ENCODE measurements at regions of chr5 and their contacts with region 1.

Region 1: GRCh38 chr5:157431544-157432200 is 28.3 kb upstream of the NIPAL4 start:
- DNase-seq: peak in 1 of 2 experiments; percentile 63
- H3K4me3 ChIP-seq: no peak overlapping the region
- H3K4me3 Mint-ChIP-seq: no peak overlapping the region
- H3K27ac Mint-ChIP-seq: no peak overlapping the region
- H3K4me1 ChIP-seq: no peaks in the 10 kb centered on the region
- H3K4me1 Mint-ChIP-seq: no peaks in the 10 kb centered on the region
- H3K27me3 ChIP-seq: no peaks in the 10 kb centered on the region
- H3K27me3 Mint-ChIP-seq: no peaks in the 10 kb centered on the region
- CTCF ChIP-seq: peak; percentile 56 to 60

Region 2: DNA sequence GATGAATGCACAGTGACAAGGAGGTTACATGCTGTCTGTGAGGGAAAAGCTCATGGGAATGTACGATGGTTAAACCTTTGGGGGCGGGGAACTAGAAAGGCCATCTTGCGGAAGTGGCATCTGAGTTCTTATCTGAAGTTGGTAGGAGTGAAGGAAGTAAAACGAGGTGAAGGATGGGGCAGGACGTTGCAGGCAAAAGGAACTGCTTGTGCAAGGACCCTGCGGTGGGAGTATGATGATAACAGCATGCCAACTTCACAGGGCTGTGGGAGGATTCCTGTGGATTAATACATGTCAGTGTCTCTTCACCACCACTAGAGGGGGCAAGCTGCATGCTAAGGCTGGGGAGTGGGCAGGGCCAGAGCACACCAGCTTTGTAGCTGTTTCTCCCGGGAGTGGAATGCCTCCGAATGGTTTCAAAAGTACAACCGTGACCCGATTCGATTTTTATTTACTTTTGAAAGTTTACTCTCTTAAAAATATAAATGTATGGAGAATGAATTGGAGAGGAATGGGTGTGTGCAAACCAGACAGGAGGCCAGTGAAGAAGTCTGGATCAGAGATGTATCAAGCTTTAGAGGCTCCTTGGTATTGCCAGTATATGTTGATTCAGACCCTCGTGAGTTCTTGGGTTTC is 103.3 kb before region 1 on chr5:
- CTCF ChIA-PET with region 1: interaction called, 5 read pairs
- POLR2A ChIA-PET with region 1: no interaction called
- intact Hi-C with region 1: loop called (anchors 2 kb)
- DNase-seq: peak; percentile 68 to 78
- H3K4me3 ChIP-seq: 0 out of 2 replicates have a peak overlapping the region, but pooled peaks have one; percentile 10
- H3K4me3 Mint-ChIP-seq: peak overlapping the region; percentile 39
- H3K27ac Mint-ChIP-seq: no peak overlapping the region
- H3K4me1 ChIP-seq: peaks cover 30% of the 10 kb centered on the region
- H3K4me1 Mint-ChIP-seq: peaks cover 21% of the 10 kb centered on the region
- H3K27me3 ChIP-seq: no peaks in the 10 kb centered on the region
- H3K27me3 Mint-ChIP-seq: no peaks in the 10 kb centered on the region
- CTCF ChIP-seq: peak; percentile 86 to 94

Region 3: DNA sequence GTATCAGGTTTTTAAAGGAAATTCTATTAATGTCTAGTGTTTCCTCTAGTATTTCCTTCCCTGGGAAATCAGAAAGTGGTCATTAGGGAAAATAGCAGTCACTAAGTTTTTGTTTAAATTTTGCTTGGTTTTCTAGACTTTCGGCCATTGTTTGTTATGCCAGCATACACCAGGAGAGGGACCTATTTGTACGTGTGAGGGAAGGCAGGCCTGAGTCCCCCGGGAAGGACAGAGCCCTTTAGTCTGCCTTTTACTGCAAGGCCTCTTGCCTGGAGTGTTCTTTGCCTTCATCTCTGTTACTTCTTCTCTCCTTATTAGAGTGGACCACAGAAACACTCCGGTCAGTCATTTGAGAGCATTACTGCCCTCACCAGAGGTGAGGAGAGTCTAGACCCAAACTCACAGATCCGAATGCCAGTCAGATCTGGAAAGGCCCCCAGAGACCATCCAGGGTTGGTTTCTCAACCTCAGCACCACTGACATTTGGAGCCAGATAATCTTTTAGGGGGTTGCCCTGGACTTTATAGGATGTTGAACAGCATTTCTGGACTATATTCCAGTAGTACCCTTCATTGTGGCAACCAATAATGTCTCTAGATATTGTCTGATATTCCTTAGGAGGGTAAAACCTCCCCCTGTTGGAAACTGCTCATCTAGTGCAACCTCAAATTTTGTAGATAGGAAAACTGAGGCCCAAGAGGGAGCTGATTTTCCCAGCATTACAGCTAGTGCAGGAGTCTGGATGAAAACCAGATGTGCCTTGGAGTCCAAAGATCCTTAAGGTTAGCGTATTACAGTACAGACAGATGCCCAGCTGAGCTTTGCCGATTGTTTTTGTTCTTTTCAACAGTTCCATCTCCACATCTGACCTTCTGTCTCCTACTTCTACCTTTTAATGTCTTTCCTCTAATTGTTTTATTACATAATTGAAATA is 64.7 kb before region 1 on chr5:
- CTCF ChIA-PET with region 1: no interaction called
- POLR2A ChIA-PET with region 1: no interaction called
- intact Hi-C with region 1: loop called (anchors 2 kb)
- DNase-seq: peak in 1 of 2 experiments; percentile 47
- H3K4me3 ChIP-seq: no peak overlapping the region
- H3K4me3 Mint-ChIP-seq: no peak overlapping the region
- H3K27ac Mint-ChIP-seq: no peak overlapping the region
- H3K4me1 ChIP-seq: no peaks in the 10 kb centered on the region; the same call in 1 of the 2 replicates
- H3K4me1 Mint-ChIP-seq: no peaks in the 10 kb centered on the region
- H3K27me3 ChIP-seq: no peaks in the 10 kb centered on the region
- H3K27me3 Mint-ChIP-seq: no peaks in the 10 kb centered on the region
- CTCF ChIP-seq: peak in 1 of 2 experiments; percentile 69

Region 4: DNA sequence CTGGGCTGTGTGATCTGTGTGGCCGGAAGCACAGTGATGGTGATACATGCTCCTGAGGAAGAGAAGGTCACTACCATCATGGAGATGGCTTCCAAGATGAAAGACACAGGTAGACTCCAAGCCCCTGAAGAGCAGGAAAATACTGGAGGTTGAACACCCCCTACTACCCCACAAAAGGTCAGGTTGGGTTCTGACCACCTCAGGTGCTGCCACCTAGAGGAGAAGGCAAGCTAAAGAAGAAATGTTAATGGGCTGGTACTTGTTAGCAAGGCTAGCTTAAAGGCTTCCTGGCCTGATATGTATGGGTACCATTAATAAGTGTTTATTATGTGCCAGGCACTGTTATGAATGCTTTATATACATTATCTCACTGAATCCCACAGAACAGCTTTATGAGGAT is 40.0 kb after region 1 on chr5:
- CTCF ChIA-PET with region 1: interaction called, 9 read pairs
- POLR2A ChIA-PET with region 1: no interaction called
- intact Hi-C with region 1: loop called (anchors 1 kb)
- DNase-seq: peak; percentile 48 to 58
- H3K4me3 ChIP-seq: no peak overlapping the region
- H3K4me3 Mint-ChIP-seq: no peak overlapping the region
- H3K27ac Mint-ChIP-seq: no peak overlapping the region
- H3K4me1 ChIP-seq: no peaks in the 10 kb centered on the region
- H3K4me1 Mint-ChIP-seq: no peaks in the 10 kb centered on the region
- H3K27me3 ChIP-seq: no peaks in the 10 kb centered on the region
- H3K27me3 Mint-ChIP-seq: no peaks in the 10 kb centered on the region
- CTCF ChIP-seq: peak; percentile 50 to 62

Region 5: GRCh38 chr5:157516626-157517325 is 85.1 kb after region 1 on chr5:
- CTCF ChIA-PET with region 1: no interaction called
- POLR2A ChIA-PET with region 1: no interaction called
- intact Hi-C with region 1: no loop called
- DNase-seq: no peak
- H3K4me3 ChIP-seq: no peak overlapping the region
- H3K4me3 Mint-ChIP-seq: no peak overlapping the region
- H3K27ac Mint-ChIP-seq: no peak overlapping the region
- H3K4me1 ChIP-seq: no peaks in the 10 kb centered on the region
- H3K4me1 Mint-ChIP-seq: no peaks in the 10 kb centered on the region
- H3K27me3 ChIP-seq: no peaks in the 10 kb centered on the region
- H3K27me3 Mint-ChIP-seq: no peaks in the 10 kb centered on the region
- CTCF ChIP-seq: no peak

Region 6: GRCh38 chr5:157528036-157528632 is 96.5 kb after region 1 on chr5:
- CTCF ChIA-PET with region 1: no interaction called
- POLR2A ChIA-PET with region 1: no interaction called
- intact Hi-C with region 1: no loop called
- DNase-seq: peak in 1 of 2 experiments; percentile 13
- H3K4me3 ChIP-seq: no peak overlapping the region
- H3K4me3 Mint-ChIP-seq: no peak overlapping the region
- H3K27ac Mint-ChIP-seq: no peak overlapping the region
- H3K4me1 ChIP-seq: no peaks in the 10 kb centered on the region
- H3K4me1 Mint-ChIP-seq: no peaks in the 10 kb centered on the region
- H3K27me3 ChIP-seq: no peaks in the 10 kb centered on the region
- H3K27me3 Mint-ChIP-seq: no peaks in the 10 kb centered on the region
- CTCF ChIP-seq: peak in 1 of 2 experiments; percentile 16

Region 7: DNA sequence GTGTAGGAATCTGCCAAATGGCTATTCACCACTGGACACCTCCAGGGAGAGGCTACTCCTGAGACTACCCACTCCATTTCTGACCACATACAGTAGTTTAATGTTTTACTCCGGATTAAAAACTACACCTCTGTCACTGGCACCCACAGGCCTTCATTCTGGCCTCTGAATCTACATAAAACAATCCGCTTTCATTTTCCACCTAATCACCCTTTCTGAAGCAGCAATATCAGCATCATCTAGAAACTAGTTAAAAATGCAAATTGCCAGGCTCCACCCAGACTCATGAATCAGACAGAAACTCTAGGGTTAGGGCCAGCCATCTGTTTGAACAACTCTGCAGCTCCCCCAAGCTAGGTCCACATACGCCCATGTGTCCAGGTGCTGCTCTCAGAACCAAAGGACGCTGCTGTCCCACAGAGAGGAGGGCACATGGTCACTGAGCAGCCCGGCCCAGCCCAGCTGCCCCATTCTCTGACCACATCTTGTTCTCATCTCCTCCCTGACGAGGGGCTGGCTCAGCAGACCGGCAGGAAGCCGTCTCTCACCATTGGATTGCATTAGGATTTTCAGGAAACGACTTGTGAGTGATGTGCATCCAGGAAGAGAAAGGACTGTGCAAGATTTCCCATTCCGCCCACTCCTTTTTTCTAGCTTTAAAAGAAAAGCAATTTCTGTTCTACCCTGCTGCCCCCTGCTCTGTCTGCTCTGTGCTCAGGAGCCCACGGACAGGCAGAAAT is 109.2 kb after region 1 on chr5:
- CTCF ChIA-PET with region 1: no interaction called
- POLR2A ChIA-PET with region 1: no interaction called
- intact Hi-C with region 1: no loop called
- DNase-seq: no peak
- H3K4me3 ChIP-seq: no peak overlapping the region
- H3K4me3 Mint-ChIP-seq: no peak overlapping the region
- H3K27ac Mint-ChIP-seq: peak overlapping the region; percentile 55
- H3K4me1 ChIP-seq: peaks cover 27% of the 10 kb centered on the region
- H3K4me1 Mint-ChIP-seq: peaks cover 36% of the 10 kb centered on the region
- H3K27me3 ChIP-seq: no peaks in the 10 kb centered on the region
- H3K27me3 Mint-ChIP-seq: no peaks in the 10 kb centered on the region
- CTCF ChIP-seq: no peak

Region 8: GRCh38 chr5:157665467-157666100 is 233.9 kb after region 1 on chr5:
- CTCF ChIA-PET with region 1: no interaction called
- POLR2A ChIA-PET with region 1: no interaction called
- intact Hi-C with region 1: loop called (anchors 5 kb)
- DNase-seq: no peak
- H3K4me3 ChIP-seq: no peak overlapping the region
- H3K4me3 Mint-ChIP-seq: no peak overlapping the region
- H3K27ac Mint-ChIP-seq: peak overlapping the region; percentile 1
- H3K4me1 ChIP-seq: peaks cover 21% of the 10 kb centered on the region
- H3K4me1 Mint-ChIP-seq: peaks cover 23% of the 10 kb centered on the region
- H3K27me3 ChIP-seq: no peaks in the 10 kb centered on the region
- H3K27me3 Mint-ChIP-seq: no peaks in the 10 kb centered on the region
- CTCF ChIP-seq: no peak

Region 9: GRCh38 chr5:157718519-157718918 is 286.8 kb after region 1 on chr5:
- CTCF ChIA-PET with region 1: interaction called, 5 read pairs
- POLR2A ChIA-PET with region 1: no interaction called
- intact Hi-C with region 1: loop called (anchors 1 kb)
- DNase-seq: peak in 1 of 2 experiments; percentile 64
- H3K4me3 ChIP-seq: no peak overlapping the region
- H3K4me3 Mint-ChIP-seq: no peak overlapping the region
- H3K27ac Mint-ChIP-seq: peak overlapping the region; percentile 16
- H3K4me1 ChIP-seq: no peaks in the 10 kb centered on the region
- H3K4me1 Mint-ChIP-seq: no peaks in the 10 kb centered on the region
- H3K27me3 ChIP-seq: no peaks in the 10 kb centered on the region
- H3K27me3 Mint-ChIP-seq: no peaks in the 10 kb centered on the region
- CTCF ChIP-seq: peak; percentile 62 to 67